Dendritic cell treated with granulocyte-macrophage colony-stimulating factor and Interleukin-4, amounts not matched to agents 40 ng/mL and 50 ng/mL, for 4 days (primary cell): ENCODE measurements at regions of chr9 and their contacts with region 1.

Region 1: DNA sequence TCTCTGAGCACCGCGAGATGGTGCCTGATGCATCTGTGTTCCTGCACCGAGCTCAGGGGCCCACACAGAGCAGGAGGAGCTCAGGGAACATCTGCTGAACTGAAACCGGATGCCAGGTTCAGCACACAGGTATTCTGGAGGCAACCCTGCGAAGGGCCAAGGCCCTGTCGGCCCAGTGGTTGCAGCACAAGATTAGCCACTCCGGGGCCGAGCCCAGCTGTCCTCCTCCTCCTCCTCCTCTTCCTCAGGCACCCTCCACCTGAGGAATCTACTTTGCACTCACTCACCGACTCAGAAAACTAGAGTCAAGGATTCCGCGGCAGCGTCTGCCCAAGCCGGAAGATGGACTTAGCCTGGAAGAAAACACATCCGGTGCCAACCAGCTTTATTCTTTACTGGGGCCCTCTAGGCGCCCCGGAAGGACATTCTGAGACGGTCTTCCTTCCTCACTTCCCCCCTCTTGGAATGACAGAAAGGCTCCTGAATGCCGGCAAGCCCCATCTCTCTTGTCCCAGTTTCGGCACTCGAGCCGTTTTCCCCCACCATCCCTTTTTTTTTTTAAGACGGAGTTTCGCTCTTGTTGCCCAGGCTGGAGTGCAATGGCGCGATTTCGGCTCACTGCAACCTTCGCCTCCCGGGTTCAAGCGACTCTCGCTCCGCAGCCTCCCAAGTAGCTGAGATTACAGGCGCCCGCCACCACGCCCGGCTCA is at the start of gene ZBTB6:
- H3K4me3 Mint-ChIP-seq: peak within 1 kb of the TSS; percentile 99
- H3K27ac Mint-ChIP-seq: peak within 1 kb of the TSS; percentile 98
- H3K4me1 Mint-ChIP-seq: peaks cover 26% of the 10 kb centered on the region
- H3K27me3 Mint-ChIP-seq: no peaks in the 10 kb centered on the region

Region 2: DNA sequence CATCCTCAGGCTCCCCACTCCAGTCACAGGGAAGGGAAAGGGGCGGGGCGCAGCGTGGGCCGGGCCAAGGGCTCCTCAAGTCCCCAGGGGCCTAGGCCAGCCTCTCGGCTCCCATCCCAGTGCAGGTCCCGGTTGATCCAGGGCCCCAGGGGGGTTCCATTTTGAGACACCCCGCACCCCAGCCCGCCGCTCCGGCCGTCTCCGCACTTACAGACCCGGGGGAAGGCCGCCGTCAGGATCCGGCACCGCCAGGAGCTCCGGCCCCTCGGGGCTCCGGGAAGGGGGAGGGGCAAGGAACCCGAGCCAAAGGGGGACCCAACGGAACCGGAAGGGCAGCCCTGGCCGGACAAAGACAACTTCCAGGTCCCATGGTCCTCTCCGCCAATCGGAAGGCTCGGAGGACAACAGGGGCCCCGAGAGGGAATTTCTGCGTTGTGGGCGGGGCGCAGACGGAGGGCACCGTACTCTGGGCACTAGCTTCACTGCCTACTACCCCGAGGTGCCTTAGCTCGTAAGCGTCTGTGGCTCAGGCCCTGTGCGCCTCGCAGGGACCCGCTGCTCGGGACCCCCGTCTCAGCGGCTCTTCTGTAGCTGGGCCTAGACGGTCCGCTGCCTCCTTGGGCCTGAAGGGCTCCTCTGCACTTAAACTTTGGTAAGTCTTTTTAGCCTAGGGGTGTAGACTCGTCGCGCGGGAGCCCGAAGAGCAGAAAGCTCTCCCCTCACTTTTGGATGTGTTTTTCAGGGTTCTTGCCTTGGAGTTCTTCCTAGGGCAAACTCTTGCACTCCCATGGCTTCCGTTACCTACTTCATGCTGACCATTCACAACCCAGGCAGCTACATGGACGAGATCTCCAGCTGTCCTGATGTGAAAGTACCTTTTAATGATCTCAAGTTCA is 18.4 kb after region 1 on chr9 and contains the start of gene ZBTB26:
- intact Hi-C with region 1: loop called (anchors 1 kb)
- H3K4me3 Mint-ChIP-seq: no peak within 1 kb of the TSS
- H3K27ac Mint-ChIP-seq: no peak within 1 kb of the TSS
- H3K4me1 Mint-ChIP-seq: peaks cover 14% of the 10 kb centered on the region
- H3K27me3 Mint-ChIP-seq: no peaks in the 10 kb centered on the region

Region 3: DNA sequence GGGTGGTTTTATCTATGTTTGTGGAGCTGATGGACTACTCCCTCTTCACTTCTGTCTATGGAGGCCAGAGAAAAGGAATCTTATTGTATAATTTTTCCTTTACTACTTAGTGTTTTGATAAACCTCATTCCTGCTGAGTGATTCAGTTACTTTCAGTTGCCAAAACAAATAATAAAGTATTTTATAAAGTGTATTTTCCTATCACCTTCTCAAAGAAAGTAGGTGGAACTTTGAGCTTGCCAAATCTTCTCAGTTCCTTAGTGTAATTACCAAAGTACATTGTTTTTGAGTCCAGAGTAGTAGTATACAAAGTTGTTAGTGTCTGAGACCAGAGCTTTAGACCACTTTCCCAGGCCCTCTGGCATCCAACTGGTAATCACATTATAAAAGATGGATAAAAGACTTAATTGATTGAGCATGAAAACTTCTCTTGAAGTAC is 41.2 kb after region 1 on chr9:
- intact Hi-C with region 1: no loop called
- H3K4me3 Mint-ChIP-seq: no peak overlapping the region
- H3K27ac Mint-ChIP-seq: peak overlapping the region; percentile 65
- H3K4me1 Mint-ChIP-seq: peaks cover 48% of the 10 kb centered on the region
- H3K27me3 Mint-ChIP-seq: no peaks in the 10 kb centered on the region